IMR-90 (cell line): ENCODE measurements at regions of chr20 and their contacts with region 1.

Region 1: GRCh38 chr20:32396646-32397160 is 38.6 kb downstream of the ASXL1 start:
- DNase-seq: peak; percentile 42
- ATAC-seq: peak; percentile 81
- H3K4me3 ChIP-seq: no peak overlapping the region
- H3K27ac ChIP-seq: no peak overlapping the region
- H3K4me1 ChIP-seq: peaks cover 2% of the 10 kb centered on the region; the same call in 1 of the 2 replicates
- H3K27me3 ChIP-seq: no peaks in the 10 kb centered on the region
- CTCF ChIP-seq: no peak
- POLR2A ChIP-seq: no peak
- RAD21 ChIP-seq: no peak

Region 2: DNA sequence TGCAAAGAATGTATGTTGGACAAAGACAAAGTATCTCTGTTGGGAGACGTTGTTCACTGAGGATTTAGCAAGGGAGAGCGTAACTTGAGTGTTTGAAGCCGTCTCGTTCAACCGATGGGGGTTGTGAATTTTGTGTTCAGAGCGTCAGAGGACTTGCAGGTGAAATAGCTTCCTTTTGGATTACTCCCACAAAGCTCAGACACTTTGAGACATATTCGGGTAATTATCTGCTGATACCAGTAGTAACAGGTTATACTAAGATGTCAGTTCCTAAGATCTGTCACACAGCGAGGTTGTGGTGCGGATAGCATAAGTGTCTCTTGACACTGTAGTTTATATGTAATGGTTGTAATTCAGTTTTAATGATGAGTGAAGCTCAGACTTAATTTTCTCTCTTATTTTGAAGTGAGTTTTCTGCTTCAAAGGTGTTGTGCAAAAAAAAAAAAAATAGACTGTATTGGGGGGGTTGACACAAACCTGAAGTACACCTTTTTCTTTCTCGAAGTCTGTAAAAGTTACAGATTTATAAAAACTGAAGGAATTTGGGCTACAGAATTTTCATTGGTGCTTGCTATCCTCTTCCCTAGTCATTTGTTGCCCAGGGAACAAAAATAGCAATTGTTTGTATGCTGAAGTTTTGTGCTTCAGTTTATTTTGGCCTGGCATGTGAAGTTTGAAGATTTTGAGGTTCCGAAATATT is 36.9 kb before region 1 on chr20:
- CTCF ChIA-PET with region 1: no interaction called
- POLR2A ChIA-PET with region 1: no interaction called
- dilution Hi-C with region 1: no loop called
- in situ Hi-C with region 1: no loop called
- intact Hi-C with region 1: loop called (anchors 5 kb)
- DNase-seq: peak; percentile 31
- ATAC-seq: no peak
- H3K4me3 ChIP-seq: peak overlapping the region; percentile 92
- H3K27ac ChIP-seq: peak overlapping the region; percentile 53
- H3K4me1 ChIP-seq: peaks cover 3% of the 10 kb centered on the region
- H3K27me3 ChIP-seq: no peaks in the 10 kb centered on the region
- CTCF ChIP-seq: no peak
- POLR2A ChIP-seq: peak; percentile 25; the same call in 1 of the 2 replicates
- RAD21 ChIP-seq: no peak